K562 (cell line): ENCODE measurements at regions of chr1 and their contacts with region 1.

Region 1: GRCh38 chr1:19311959-19312781 is at the starts of genes AKR7A2 and SLC66A1:
- DNase-seq: peak; percentile 97 to 99 (median 99)
- ATAC-seq: peak; percentile 86
- H3K4me3 ChIP-seq: peak within 1 kb of the TSS; percentile 77
- H3K27ac ChIP-seq: peak within 1 kb of the TSS; percentile 97
- H3K4me1 ChIP-seq: peaks cover 50 to 70% of the 10 kb centered on the region in 2 experiments
- H3K27me3 ChIP-seq: no peaks in the 10 kb centered on the region
- CTCF ChIP-seq: no peak
- EP300 ChIP-seq: peak; percentile 45; the same call in 1 of the 2 replicates
- POLR2A ChIP-seq: peak; percentile 90
- RAD21 ChIP-seq: 0 out of 4 replicates have a peak, but pooled peaks of 1 of the 2 experiments have one; percentile 9
- polyA plus RNA-seq, gene AKR7A2: 2.0 to 4.0 TPM
- polyA plus RNA-seq, gene SLC66A1: 1.2 to 1.6 TPM

Region 2: DNA sequence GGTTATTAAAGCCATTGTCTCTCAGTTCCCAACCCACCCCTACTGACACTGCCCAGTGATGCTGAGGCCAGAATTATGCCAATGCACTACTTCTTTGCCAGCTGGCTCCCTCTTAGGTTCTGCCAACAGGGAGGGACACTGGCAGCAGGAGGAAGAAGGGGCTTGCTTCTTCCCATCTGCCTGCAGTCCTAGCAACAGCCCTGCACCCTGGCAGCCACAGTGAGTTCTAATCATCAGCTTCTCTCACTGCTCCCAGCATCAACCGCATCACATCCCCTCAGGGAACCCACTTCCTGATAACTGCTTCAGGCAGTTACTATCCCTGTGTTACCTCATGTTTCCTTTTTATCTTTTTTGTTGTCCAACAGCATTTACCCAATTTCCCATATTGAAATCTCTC is 188.3 kb before region 1 on chr1:
- CTCF ChIA-PET with region 1: no interaction called
- POLR2A ChIA-PET with region 1: no interaction called
- in situ Hi-C with region 1: no loop called
- intact Hi-C with region 1: no loop called
- DNase-seq: no peak
- ATAC-seq: no peak
- H3K4me3 ChIP-seq: no peak overlapping the region
- H3K27ac ChIP-seq: no peak overlapping the region
- H3K4me1 ChIP-seq: no peaks in the 10 kb centered on the region
- H3K27me3 ChIP-seq: no peaks in the 10 kb centered on the region
- CTCF ChIP-seq: no peak
- EP300 ChIP-seq: no peak
- POLR2A ChIP-seq: no peak
- RAD21 ChIP-seq: no peak

Region 3: DNA sequence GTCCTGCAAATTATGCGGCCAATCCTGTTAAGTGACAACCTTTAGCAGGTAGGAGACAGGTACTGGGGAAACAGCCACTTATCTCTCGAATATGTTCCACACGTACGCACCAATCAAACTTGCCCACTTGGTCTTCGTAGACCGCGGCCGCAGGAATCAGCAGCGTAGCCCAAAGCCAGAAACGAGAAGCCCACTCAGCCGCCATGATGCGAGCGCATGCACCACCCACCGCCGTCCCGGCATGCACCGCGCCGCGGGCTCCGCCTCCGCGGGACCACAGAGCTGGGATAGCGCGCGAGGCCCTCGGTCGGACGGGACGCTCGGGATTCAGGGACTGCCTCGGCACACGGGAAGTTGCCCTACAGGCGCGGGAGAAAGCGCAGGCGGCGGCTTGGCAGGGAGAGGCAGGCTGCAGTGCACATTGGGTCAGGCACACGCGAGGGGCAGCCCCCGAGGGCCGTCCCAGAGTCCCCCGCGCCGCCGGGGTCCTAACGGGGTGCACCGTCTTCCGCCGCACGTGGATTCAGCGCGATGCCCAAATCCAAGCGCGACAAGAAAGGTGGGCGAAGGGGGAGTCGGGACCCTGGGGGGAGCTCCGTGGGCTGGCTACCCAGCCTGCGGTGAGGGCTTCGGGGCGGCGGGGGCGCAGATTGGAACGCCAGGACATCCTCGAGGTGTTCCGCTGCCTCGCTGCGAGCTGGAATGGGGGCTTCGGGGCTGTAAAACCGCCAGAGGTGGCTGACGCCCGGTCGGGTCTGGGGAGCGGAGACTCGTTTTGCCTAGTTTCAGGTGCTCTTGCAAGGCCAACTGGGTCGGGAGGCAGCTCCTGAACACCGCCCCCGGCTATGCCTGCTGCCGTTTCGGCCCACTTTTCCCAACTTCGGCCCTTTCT is 60.6 kb before region 1 on chr1 and contains the starts of genes EMC1 and MRTO4:
- CTCF ChIA-PET with region 1: no interaction called
- POLR2A ChIA-PET with region 1: interaction called, 7 read pairs
- in situ Hi-C with region 1: no loop called
- intact Hi-C with region 1: loop called (anchors 5 kb)
- DNase-seq: peak; percentile 94 to 95 (median 94)
- ATAC-seq: peak; percentile 93
- H3K4me3 ChIP-seq: peak within 1 kb of the TSS; percentile 99
- H3K27ac ChIP-seq: peak within 1 kb of the TSS; percentile 99
- H3K4me1 ChIP-seq: peaks cover 14 to 21% of the 10 kb centered on the region in 2 experiments; a peak in 4 of 5 replicates
- H3K27me3 ChIP-seq: no peaks in the 10 kb centered on the region
- CTCF ChIP-seq: no peak
- EP300 ChIP-seq: no peak; the same call in 1 of the 2 replicates
- POLR2A ChIP-seq: peak; percentile 97
- RAD21 ChIP-seq: no peak
- polyA plus RNA-seq, gene EMC1: 32.1 to 69.3 TPM
- polyA plus RNA-seq, gene MRTO4: 62.0 to 146 TPM

Region 4: GRCh38 chr1:19260211-19261138 is 51.7 kb before region 1 on chr1:
- CTCF ChIA-PET with region 1: no interaction called
- POLR2A ChIA-PET with region 1: interaction called, 19 read pairs
- in situ Hi-C with region 1: no loop called
- intact Hi-C with region 1: no loop called
- DNase-seq: peak in 2 of 4 experiments; percentile 24 to 40
- ATAC-seq: peak; percentile 65
- H3K4me3 ChIP-seq: no peak overlapping the region
- H3K27ac ChIP-seq: peak overlapping the region; percentile 52; the same call in 2 of the 3 replicates
- H3K4me1 ChIP-seq: peaks cover 0 to 13% of the 10 kb centered on the region in 2 experiments; a peak in 3 of 5 replicates
- H3K27me3 ChIP-seq: no peaks in the 10 kb centered on the region
- CTCF ChIP-seq: no peak
- EP300 ChIP-seq: no peak
- POLR2A ChIP-seq: peak; percentile 72
- RAD21 ChIP-seq: no peak

Region 5: DNA sequence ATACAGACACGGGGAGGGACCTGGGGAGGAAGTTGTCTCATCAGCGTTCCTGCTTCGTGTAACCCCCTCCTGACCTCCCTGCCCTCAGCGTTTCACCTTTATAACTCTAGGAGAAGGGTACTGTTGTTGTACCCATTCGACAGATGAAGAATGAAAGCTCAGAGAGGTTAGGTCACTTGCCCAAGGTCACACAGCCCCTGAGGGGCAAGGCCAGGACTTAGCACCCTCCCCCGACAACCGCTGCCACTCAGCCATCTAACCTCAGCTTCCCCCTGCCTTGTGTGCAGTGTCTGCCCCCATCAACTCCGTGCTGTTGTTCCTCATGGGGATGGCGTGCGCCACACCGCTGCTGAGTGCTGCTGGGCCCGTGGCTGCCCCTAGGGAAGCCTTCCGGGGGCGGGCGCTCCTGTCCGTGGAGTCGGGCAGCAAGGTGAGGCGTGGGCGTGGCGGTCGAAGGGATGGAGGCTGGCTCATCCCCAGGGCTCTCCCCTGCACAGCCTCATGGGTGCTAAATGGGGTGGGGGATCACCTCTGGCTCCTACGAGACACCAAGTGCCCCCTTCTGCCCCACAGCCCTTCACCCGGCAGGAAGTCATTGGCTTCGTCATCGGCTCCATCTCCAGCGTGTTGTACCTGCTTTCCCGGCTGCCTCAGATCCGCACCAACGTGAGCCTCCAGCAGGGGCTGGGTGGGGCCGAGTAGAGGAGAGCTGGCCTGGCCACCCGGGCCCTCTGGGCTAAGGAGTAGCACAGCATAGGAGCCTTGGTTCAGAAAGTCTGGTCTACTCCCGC is 14.0 kb after region 1 on chr1:
- CTCF ChIA-PET with region 1: no interaction called
- POLR2A ChIA-PET with region 1: interaction called, 21 read pairs
- in situ Hi-C with region 1: no loop called
- intact Hi-C with region 1: no loop called
- DNase-seq: peak in 2 of 4 experiments; percentile 46 to 53
- ATAC-seq: no peak
- H3K4me3 ChIP-seq: no peak overlapping the region
- H3K27ac ChIP-seq: peak overlapping the region; percentile 82
- H3K4me1 ChIP-seq: peaks cover 16 to 42% of the 10 kb centered on the region in 2 experiments
- H3K27me3 ChIP-seq: no peaks in the 10 kb centered on the region
- CTCF ChIP-seq: no peak
- EP300 ChIP-seq: no peak
- POLR2A ChIP-seq: no peak
- RAD21 ChIP-seq: no peak